ENCODE measurements at regions of chr13 and their contacts with region 1.

Region 1: DNA sequence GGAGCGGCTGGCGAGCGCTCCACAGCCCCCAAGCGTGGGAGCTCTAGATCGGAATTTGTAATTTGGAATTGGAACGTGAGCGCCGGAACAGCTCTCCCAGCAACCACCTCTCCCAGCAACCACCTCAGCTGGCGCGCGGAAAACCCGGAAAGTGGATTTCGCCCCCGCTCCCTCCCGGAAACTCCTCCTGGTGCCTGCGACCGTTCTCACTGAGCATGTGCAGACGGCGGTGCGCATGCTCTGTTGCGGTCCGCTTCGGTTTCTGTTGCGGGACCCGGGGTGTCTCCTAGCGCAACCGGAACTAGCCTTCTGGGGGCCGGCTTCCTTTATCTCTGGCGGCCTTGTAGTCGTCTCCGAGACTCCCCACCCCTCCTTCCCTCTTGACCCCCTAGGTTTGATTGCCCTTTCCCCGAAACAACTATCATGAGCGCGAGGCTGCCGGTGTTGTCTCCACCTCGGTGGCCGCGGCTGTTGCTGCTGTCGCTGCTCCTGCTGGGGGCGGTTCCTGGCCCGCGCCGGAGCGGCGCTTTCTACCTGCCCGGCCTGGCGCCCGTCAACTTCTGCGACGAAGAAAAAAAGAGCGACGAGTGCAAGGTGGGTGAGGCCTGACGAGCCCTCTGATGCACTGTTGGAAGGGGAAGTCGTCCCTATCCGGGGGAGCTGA is at the start of gene TM9SF2:
- DNase-seq: peak; percentile 98
- ATAC-seq: peak; percentile 60
- H3K4me3 ChIP-seq: peak within 1 kb of the TSS; percentile 75 to 89 (median 87)
- H3K4me3 Mint-ChIP-seq: peak within 1 kb of the TSS; percentile 92
- H3K27ac ChIP-seq: peak within 1 kb of the TSS; percentile 89 to 90
- H3K27ac Mint-ChIP-seq: peak within 1 kb of the TSS; percentile 98
- H3K4me1 ChIP-seq: peaks cover 63 to 65% of the 10 kb centered on the region in 2 donors
- H3K4me1 Mint-ChIP-seq: peaks cover 77% of the 10 kb centered on the region
- H3K27me3 ChIP-seq: no peaks in the 10 kb centered on the region
- H3K27me3 Mint-ChIP-seq: no peaks in the 10 kb centered on the region
- CTCF ChIP-seq: no peak
- total RNA-seq, gene TM9SF2: 63.3 and 63.6 TPM in 2 replicates

Region 2: GRCh38 chr13:99087096-99087953 is 414.0 kb before region 1 on chr13:
- CTCF ChIA-PET with region 1: no interaction called
- POLR2A ChIA-PET with region 1: interaction called, 3 read pairs
- intact Hi-C with region 1: loop called (anchors 5 kb)
- DNase-seq: peak; percentile 94
- ATAC-seq: peak; percentile 74
- H3K4me3 ChIP-seq: peak overlapping the region; percentile 65 to 89 (median 88)
- H3K4me3 Mint-ChIP-seq: peak overlapping the region; percentile 100
- H3K27ac ChIP-seq: peak overlapping the region; percentile 82 to 92
- H3K27ac Mint-ChIP-seq: peak overlapping the region; percentile 99
- H3K4me1 ChIP-seq: peaks cover 26 to 27% of the 10 kb centered on the region in 2 donors
- H3K4me1 Mint-ChIP-seq: peaks cover 32% of the 10 kb centered on the region
- H3K27me3 ChIP-seq: peaks cover 0 to 3% (median 0%) of the 10 kb centered on the region in 4 experiments
- H3K27me3 Mint-ChIP-seq: peaks cover 5% of the 10 kb centered on the region
- CTCF ChIP-seq: peak; percentile 42

Region 3: DNA sequence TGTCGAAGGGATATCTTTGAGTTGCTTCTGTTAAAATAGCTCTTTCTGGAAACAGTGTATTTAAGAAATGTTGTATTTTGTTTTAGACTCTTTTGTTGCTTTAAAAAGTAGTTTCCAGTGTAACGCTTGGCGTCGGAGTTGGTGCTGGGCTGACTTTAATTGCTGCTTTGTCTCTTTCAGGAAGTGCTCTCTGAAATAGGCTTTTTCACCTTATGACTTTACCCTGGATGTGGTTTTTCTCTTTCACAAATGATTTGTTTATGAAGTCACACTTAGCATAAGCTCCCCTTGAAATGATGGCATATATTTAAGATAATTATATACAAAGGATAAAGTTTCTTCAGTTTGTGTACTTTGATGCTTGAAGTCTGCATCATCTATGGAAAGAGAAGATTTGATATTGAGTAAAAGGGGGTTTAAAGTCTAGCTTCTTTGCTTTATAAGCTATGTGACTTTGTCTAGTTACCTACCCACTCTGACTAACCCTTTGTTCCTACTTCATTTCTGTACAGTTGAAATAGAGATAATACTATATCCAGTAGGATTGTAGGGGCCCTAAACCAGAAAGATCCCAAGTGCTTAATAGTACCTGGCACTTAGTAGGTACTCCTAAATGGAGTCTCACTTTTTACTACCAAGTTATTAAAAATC is 243.0 kb before region 1 on chr13 and contains the start of gene GPR18:
- CTCF ChIA-PET with region 1: no interaction called
- POLR2A ChIA-PET with region 1: no interaction called
- intact Hi-C with region 1: loop called (anchors 2 kb)
- DNase-seq: peak; percentile 75
- ATAC-seq: peak; percentile 66
- H3K4me3 ChIP-seq: peak within 1 kb of the TSS; percentile 60 to 98 (median 79)
- H3K4me3 Mint-ChIP-seq: peak within 1 kb of the TSS; percentile 98
- H3K27ac ChIP-seq: peak within 1 kb of the TSS; percentile 86 to 90
- H3K27ac Mint-ChIP-seq: peak within 1 kb of the TSS; percentile 96
- H3K4me1 ChIP-seq: peaks cover 57 to 68% of the 10 kb centered on the region in 2 donors
- H3K4me1 Mint-ChIP-seq: peaks cover 81% of the 10 kb centered on the region
- H3K27me3 ChIP-seq: no peaks in the 10 kb centered on the region
- H3K27me3 Mint-ChIP-seq: no peaks in the 10 kb centered on the region
- CTCF ChIP-seq: no peak
- total RNA-seq, gene GPR18: 17.6 and 19.1 TPM in 2 replicates

Region 4: GRCh38 chr13:99442273-99442895 is 58.9 kb before region 1 on chr13:
- CTCF ChIA-PET with region 1: interaction called, 28 read pairs
- POLR2A ChIA-PET with region 1: no interaction called
- intact Hi-C with region 1: loop called (anchors 1 kb)
- DNase-seq: peak; percentile 76
- ATAC-seq: peak; percentile 80
- H3K4me3 ChIP-seq: no peak overlapping the region
- H3K4me3 Mint-ChIP-seq: no peak overlapping the region
- H3K27ac ChIP-seq: no peak overlapping the region
- H3K27ac Mint-ChIP-seq: no peak overlapping the region
- H3K4me1 ChIP-seq: peaks cover 14 to 17% of the 10 kb centered on the region in 2 donors
- H3K4me1 Mint-ChIP-seq: peaks cover 15% of the 10 kb centered on the region
- H3K27me3 ChIP-seq: no peaks in the 10 kb centered on the region
- H3K27me3 Mint-ChIP-seq: no peaks in the 10 kb centered on the region
- CTCF ChIP-seq: peak; percentile 99

Region 5: GRCh38 chr13:99606324-99607066 is 105.2 kb after region 1 on chr13:
- CTCF ChIA-PET with region 1: interaction called, 3 read pairs
- POLR2A ChIA-PET with region 1: interaction called, 3 read pairs
- intact Hi-C with region 1: loop called (anchors 1 kb)
- DNase-seq: peak; percentile 93
- ATAC-seq: peak; percentile 90
- H3K4me3 ChIP-seq: peak within 1 kb of the TSS; percentile 70 to 98 (median 86)
- H3K4me3 Mint-ChIP-seq: peak within 1 kb of the TSS; percentile 98
- H3K27ac ChIP-seq: peak within 1 kb of the TSS; percentile 68 to 74
- H3K27ac Mint-ChIP-seq: peak within 1 kb of the TSS; percentile 90
- H3K4me1 ChIP-seq: peaks cover 8 to 21% of the 10 kb centered on the region in 2 donors
- H3K4me1 Mint-ChIP-seq: peaks cover 37% of the 10 kb centered on the region
- H3K27me3 ChIP-seq: no peaks in the 10 kb centered on the region
- H3K27me3 Mint-ChIP-seq: no peaks in the 10 kb centered on the region
- CTCF ChIP-seq: no peak

Measured in B cell (primary cell).